ENCODE measurements at regions of chr2 and their contacts with region 1.

Region 1: GRCh38 chr2:27133905-27134780 is at the start of gene PREB:
- DNase-seq: peak; percentile 97 to 99 (median 98)
- H3K4me3 ChIP-seq: peak within 1 kb of the TSS; percentile 86
- H3K4me3 Mint-ChIP-seq: peak within 1 kb of the TSS; percentile 89 to 97 (median 94)
- H3K27ac ChIP-seq: peak within 1 kb of the TSS; percentile 91
- H3K27ac Mint-ChIP-seq: peak within 1 kb of the TSS; percentile 83 to 98 (median 97)
- H3K4me1 ChIP-seq: peaks cover 15% of the 10 kb centered on the region
- H3K4me1 Mint-ChIP-seq: peaks cover 21 to 31% (median 21%) of the 10 kb centered on the region in 3 donors
- H3K27me3 ChIP-seq: no peaks in the 10 kb centered on the region
- H3K27me3 Mint-ChIP-seq: peaks cover 0 to 2% of the 10 kb centered on the region in 2 donors
- total RNA-seq, gene PREB: 79.5 to 80.6 TPM

Region 2: GRCh38 chr2:27123302-27124231 is 10.6 kb before region 1 on chr2 and contains the start of gene ABHD1:
- CTCF ChIA-PET with region 1: interaction called, 24 read pairs
- POLR2A ChIA-PET with region 1: interaction called, 27 read pairs
- DNase-seq: peak; percentile 61 to 74 (median 68)
- H3K4me3 ChIP-seq: peak within 1 kb of the TSS; percentile 79
- H3K4me3 Mint-ChIP-seq: peak within 1 kb of the TSS; percentile 91 to 95 (median 93)
- H3K27ac ChIP-seq: peak within 1 kb of the TSS; percentile 38
- H3K27ac Mint-ChIP-seq: peak within 1 kb of the TSS; percentile 52 to 97 (median 88)
- H3K4me1 ChIP-seq: peaks cover 13% of the 10 kb centered on the region
- H3K4me1 Mint-ChIP-seq: peaks cover 20 to 21% (median 20%) of the 10 kb centered on the region in 3 donors
- H3K27me3 ChIP-seq: peaks cover 4% of the 10 kb centered on the region
- H3K27me3 Mint-ChIP-seq: peaks cover 10 to 12% of the 10 kb centered on the region in 2 donors
- total RNA-seq, gene ABHD1: 0.33 to 0.90 TPM

Region 3: GRCh38 chr2:27148801-27149439 is 14.8 kb after region 1 on chr2 and contains the start of gene TCF23:
- CTCF ChIA-PET with region 1: no interaction called
- POLR2A ChIA-PET with region 1: no interaction called
- DNase-seq: no peak
- H3K4me3 ChIP-seq: no peak within 1 kb of the TSS
- H3K4me3 Mint-ChIP-seq: no peak within 1 kb of the TSS
- H3K27ac ChIP-seq: no peak within 1 kb of the TSS
- H3K27ac Mint-ChIP-seq: peak within 1 kb of the TSS in 2 of 8 donors; percentile 4 to 33
- H3K4me1 ChIP-seq: no peaks in the 10 kb centered on the region
- H3K4me1 Mint-ChIP-seq: no peaks in the 10 kb centered on the region
- H3K27me3 ChIP-seq: no peaks in the 10 kb centered on the region
- H3K27me3 Mint-ChIP-seq: peaks cover 9 to 25% of the 10 kb centered on the region in 2 donors
- total RNA-seq, gene TCF23: not detected

Measured in CD8-positive, alpha-beta memory T cell (primary cell).